ENCODE measurements at regions of chr6 and their contacts with region 1.

Region 1: GRCh38 chr6:26122793-26123674 is 35.8 kb downstream of the HFE start:
- DNase-seq: peak; percentile 94

Region 2: DNA sequence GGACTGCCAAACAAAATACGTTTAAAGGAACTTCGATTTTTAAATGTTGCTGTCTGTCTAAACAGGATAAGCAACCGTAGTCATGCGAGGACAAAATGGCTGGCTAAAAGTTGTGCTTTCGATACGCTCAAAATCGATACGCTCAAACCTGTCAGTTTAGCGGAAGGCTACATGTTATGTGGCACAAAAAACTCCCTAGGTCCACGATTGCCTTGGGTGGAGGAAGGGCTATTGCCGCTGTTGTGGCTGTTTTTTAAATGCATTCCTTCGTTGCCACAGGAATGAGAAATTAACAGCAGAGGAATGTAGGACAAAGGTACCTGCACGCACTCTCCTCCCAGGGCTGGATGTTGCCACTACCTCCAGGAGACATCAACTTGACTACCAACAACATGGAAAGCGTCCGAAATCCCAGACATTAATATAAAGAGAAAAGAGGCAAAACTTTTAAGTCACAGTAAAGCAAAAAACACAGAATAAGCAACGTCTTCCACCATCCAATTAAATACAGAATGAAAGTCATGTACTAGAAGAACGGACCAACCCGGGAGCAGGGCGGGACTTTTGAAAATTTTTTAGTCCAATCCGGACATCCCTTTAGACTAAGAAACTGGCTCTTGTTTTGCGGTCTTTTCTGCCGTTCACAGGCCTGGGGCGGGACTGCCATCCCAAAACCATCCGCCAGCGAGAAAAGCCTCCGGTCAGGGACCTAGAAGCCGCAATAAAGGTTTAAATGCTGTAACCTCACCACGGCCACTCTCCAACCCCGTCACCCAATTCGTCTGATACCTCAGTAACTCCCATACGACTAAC is 68.0 kb before region 1 on chr6:
- intact Hi-C with region 1: loop called (anchors 1 kb)
- DNase-seq: peak; percentile 93

Region 3: DNA sequence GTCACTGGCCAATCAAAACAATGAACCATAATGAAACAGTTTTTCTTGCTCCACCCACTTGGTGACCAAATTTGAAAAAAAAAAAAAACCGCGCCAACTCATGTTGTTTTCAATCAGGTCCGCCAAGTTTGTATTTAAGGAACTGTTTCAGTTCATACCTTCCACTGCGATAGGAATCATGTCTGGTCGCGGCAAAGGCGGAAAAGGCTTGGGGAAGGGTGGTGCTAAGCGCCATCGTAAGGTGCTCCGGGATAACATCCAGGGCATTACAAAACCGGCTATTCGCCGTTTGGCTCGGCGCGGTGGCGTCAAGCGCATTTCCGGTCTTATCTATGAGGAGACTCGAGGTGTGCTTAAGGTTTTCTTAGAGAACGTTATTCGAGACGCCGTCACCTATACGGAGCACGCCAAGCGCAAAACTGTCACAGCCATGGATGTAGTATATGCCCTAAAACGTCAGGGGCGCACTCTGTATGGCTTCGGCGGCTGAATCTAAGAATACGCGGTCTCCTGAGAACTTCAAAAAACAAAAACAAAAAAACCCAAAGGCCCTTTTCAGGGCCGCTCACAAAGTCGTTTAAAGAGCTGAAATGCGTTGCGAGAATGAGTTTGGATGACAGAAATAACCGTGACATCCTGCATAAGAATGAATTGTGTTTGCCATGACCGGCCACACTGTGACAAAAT is 19.1 kb before region 1 on chr6:
- intact Hi-C with region 1: loop called (anchors 1 kb)
- DNase-seq: peak; percentile 92

Region 4: GRCh38 chr6:26141378-26141904 is 18.4 kb after region 1 on chr6:
- intact Hi-C with region 1: no loop called
- DNase-seq: no peak

Region 5: GRCh38 chr6:26170181-26170580 is 47.1 kb after region 1 on chr6:
- intact Hi-C with region 1: no loop called
- DNase-seq: no peak

Region 6: DNA sequence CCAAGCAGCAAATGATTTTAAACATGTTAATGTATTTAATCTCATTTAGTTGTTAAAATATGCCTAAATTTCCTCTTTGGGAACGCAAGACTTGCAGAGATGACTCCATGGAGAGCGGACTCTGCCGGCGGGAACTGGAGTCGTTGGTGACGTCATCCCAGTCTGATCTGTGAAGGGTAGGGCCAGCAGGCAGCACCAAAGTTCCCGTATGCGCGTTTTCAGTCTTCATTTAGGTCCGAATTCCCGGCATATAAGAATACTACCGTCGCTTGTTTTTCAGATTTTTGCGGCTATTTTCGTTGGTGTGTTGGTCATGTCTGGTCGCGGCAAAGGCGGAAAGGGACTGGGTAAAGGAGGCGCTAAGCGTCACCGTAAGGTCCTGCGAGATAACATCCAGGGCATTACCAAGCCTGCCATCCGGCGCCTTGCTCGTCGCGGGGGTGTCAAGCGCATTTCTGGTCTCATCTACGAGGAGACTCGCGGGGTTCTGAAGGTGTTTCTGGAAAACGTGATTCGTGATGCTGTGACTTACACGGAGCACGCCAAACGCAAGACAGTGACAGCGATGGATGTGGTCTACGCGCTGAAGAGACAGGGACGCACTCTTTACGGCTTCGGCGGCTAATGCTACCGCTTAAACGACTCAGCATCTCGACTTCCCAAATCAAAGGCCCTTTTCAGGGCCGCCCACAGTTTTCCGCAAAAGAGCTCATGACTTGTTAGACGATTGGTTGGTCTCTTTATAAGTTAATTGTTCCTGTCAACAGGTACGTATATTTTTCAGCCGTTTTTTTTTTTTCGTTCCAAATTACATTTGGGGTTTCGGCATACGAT is 81.5 kb after region 1 on chr6:
- intact Hi-C with region 1: loop called (anchors 1 kb)
- DNase-seq: peak; percentile 96

Region 7: DNA sequence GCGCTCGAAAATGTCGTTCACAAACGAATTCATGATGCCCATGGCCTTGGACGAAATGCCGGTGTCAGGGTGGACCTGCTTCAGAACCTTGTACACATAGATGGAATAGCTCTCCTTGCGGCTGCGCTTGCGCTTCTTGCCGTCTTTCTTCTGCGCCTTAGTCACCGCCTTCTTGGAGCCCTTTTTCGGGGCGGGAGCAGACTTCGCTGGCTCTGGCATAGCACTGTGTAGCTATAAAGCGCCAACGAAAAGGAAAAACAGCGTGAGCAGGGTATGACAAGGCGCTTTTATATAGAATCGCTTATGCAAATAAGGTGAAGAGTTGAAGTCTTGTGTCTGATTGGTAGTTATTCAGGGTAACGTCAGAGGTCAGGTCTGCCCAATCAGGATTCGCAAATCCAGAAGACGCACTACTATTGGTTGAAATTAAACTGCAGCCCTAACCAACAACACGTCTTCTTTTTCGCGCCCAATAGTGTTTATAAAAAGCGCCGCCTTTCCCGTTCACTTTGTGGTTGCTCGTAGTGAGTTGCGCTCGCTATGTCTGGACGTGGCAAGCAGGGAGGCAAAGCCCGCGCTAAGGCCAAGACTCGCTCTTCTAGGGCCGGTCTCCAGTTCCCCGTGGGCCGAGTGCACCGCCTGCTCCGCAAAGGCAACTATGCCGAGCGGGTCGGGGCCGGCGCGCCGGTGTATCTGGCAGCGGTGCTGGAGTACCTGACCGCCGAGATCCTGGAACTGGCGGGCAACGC is 1009.7 kb after region 1 on chr6:
- intact Hi-C with region 1: loop called (anchors 10 kb)
- DNase-seq: peak; percentile 87